ENCODE measurements at regions of chr9 and their contacts with region 1.

Region 1: DNA sequence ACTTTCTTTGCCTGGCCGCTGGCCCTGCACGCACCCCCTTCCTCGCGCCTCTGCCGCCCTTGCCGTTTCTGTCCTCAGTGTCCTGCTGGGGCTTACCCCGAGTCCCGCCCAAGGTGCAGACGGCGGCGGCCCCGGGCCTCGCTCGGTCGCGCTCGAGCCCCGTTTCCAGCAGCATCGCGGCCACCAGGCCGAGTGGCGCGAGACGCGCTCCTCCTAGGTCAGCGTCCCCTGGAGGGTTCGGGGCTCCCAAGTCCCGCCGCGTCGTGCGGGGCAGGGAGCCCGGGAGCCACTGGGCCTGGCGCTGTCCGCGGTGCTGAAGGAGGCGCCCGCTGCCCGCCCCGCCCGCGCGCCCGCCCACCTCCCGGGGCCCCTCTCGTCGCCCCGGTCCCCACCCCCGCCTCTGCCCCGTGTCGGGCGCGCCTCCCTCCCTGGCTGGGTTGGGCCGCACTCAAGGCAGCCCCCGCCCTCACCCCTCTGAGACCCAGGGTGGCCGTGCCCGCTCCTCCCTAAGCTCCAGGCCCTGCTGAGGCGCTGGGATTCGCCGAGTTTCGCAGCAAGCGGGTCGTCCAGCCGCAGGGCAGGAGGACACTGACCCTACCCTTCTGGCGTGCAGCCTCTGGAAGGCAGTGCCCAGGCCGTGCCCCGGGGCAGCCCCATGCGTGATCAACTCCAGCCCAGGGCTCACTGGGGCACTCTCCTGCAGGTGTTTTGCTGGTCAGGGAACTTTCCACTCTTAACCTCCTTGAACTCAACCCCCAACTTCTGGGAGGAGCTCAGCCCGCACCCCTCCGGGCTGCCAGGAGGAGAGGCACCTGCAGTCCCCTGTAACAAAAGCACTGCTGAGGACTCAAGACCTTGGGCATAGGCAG is at the start of gene LHX3:
- DNase-seq: no peak
- total RNA-seq, gene LHX3: not detected in 2 replicates

Region 2: DNA sequence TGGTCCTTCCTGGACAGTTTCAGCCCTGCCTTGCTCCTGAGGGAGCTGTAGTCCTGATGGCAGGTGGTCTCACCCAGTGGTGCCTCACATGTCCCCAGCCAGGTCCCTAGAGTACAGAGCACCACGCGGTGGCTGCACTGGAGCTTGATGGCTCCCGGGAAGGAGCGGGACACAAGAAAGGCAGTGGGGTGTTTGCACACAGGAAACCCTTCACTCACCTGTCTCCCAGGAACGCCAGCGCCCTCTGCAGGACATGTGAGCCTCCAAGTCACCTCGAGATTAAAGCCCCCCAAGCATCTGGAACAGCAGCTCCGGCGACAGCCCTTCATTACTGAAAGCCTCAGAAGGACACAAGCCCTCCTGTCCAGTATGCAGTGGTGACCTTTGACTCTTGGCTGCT is 66.5 kb before region 1 on chr9:
- in situ Hi-C with region 1: loop called (anchors 5 kb)
- DNase-seq: peak; percentile 44

Measured in G401 (cell line).